Activated naive CD4-positive, alpha-beta T cell treated with anti-CD3 and anti-CD28 coated beads, Interleukin-2, amount 10 ng/mL, durations not matched to agents 7 days and 5 days (primary cell): ENCODE measurements at regions of chr20 and their contacts with region 1.

Region 1: DNA sequence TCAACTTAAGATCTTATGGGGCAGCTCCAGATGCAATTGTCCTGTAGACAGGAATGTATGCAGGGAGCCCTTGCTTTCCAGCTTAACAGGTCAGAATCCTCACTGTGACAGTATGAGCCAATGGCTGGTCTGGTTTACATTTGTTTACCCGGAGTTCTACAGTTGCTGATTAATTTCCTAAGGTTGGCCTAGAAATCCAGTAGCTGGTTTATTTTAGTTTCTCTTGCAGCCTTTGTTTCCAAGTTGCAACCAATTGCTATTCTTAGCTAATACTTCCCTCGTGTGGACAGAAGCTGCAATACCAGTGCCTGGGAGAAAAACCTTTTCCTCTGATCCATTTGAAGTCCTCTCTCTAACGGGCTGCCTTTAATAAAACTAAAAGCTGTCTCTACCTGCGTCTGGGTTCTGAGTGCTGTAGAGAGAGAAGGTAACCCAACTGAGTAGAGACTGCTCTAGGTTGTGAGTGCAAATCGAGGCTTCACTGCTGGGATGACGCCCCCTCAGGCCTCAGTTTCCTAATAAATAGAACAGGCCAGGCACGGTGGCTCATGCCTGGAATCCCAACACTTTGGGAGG is 45.9 kb downstream of the ZNF217 start:
- DNase-seq: peak; percentile 63
- H3K4me3 Mint-ChIP-seq: no peak overlapping the region
- H3K27ac Mint-ChIP-seq: no peak overlapping the region
- H3K4me1 Mint-ChIP-seq: peaks cover 2% of the 10 kb centered on the region
- H3K27me3 Mint-ChIP-seq: no peaks in the 10 kb centered on the region

Region 2: DNA sequence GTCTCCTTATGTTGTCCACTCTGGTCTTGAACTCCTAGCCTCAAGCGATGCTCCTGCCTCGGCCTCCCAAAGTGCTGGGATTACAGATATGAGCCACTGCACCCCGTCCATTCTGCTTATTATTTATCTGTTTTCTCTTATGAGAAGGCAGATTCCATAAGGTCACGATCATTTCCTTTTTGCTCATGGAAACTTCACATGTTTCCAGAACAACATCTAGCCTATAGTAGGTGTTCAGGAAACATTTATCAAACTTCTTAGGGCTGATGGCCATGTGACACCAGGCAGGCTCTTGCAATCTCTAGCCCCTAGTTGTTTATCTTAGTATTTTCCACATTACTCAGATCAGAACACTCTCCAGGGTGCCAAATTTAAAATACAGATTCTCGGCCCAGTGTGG is 1417.3 kb before region 1 on chr20:
- CTCF ChIA-PET with region 1: interaction called, 10 read pairs
- DNase-seq: no peak
- H3K4me3 Mint-ChIP-seq: no peak overlapping the region
- H3K27ac Mint-ChIP-seq: no peak overlapping the region
- H3K4me1 Mint-ChIP-seq: peaks cover 4% of the 10 kb centered on the region
- H3K27me3 Mint-ChIP-seq: peaks cover 4% of the 10 kb centered on the region

Region 3: DNA sequence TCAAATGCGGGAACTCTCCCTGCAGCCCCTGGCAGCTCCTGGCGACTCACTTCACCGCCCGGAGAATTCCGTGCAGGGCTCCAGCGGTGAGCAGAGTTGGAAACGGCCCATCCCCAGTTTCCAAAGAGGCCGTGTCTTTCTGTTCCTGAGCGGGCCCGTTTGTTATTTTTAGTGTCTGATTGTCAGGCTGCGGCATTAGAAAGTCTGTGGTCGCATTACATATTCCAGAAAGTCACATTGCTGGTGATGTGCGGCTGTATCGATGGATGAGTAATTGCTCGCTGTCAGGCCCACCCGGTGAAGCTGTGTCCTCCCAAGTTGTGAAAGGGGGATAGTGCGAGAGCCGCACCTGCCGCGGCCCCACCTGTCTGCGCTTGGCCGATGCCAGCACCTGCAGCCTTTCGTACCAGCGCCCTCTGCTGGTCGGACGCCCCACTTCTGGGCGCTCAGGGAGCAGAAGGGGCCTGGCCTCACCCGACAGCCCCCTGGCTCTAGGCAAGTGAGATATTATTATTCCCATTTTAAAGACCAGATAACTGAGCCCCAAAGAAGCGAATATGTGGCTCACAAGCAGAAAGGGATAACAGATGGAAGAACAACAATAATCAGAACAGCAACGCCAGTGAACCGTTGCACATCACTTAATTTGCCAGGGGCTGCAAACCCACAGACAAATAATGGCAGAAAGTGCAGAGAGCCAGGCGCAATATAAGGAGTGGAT is 330.7 kb before region 1 on chr20:
- CTCF ChIA-PET with region 1: interaction called, 12 read pairs
- DNase-seq: peak; percentile 87
- H3K4me3 Mint-ChIP-seq: peak overlapping the region; percentile 14
- H3K27ac Mint-ChIP-seq: peak overlapping the region; percentile 47
- H3K4me1 Mint-ChIP-seq: peaks cover 36% of the 10 kb centered on the region
- H3K27me3 Mint-ChIP-seq: no peaks in the 10 kb centered on the region

Region 4: DNA sequence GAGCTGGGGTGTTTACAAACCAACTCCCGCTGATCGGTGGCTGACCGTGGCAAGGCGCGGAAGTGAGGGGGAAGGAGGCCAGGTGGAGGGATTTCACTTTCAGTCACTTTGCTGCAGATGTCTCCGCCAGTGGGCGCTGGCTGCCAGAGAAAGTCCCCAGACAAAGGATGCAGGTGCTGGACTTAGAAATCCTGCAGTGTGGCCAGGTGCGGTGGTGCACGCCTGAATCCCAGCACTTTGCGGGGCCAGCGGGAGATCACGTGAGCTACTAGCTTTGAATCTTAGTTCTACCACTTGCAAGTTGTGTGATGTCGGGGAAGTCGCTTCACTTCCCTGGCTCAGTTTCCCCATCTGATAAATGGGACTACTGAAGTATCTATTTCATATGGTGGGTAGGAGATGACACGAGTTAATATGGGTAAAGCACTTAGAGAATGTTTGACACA is 134.5 kb before region 1 on chr20:
- CTCF ChIA-PET with region 1: interaction called, 10 read pairs
- DNase-seq: peak; percentile 68
- H3K4me3 Mint-ChIP-seq: no peak overlapping the region
- H3K27ac Mint-ChIP-seq: no peak overlapping the region
- H3K4me1 Mint-ChIP-seq: peaks cover 7% of the 10 kb centered on the region
- H3K27me3 Mint-ChIP-seq: peaks cover 10% of the 10 kb centered on the region

Region 5: GRCh38 chr20:53677447-53678314 is 129.9 kb after region 1 on chr20:
- CTCF ChIA-PET with region 1: no interaction called
- DNase-seq: peak; percentile 63
- H3K4me3 Mint-ChIP-seq: peak overlapping the region; percentile 27
- H3K27ac Mint-ChIP-seq: peak overlapping the region; percentile 83
- H3K4me1 Mint-ChIP-seq: peaks cover 37% of the 10 kb centered on the region
- H3K27me3 Mint-ChIP-seq: no peaks in the 10 kb centered on the region

Region 6: GRCh38 chr20:53939572-53940359 is 392.0 kb after region 1 on chr20:
- CTCF ChIA-PET with region 1: interaction called, 22 read pairs
- DNase-seq: peak; percentile 86
- H3K4me3 Mint-ChIP-seq: peak overlapping the region; percentile 6
- H3K27ac Mint-ChIP-seq: peak overlapping the region; percentile 9
- H3K4me1 Mint-ChIP-seq: peaks cover 66% of the 10 kb centered on the region
- H3K27me3 Mint-ChIP-seq: no peaks in the 10 kb centered on the region